ENCODE measurements at regions of chr14 and their contacts with region 1.

Region 1: DNA sequence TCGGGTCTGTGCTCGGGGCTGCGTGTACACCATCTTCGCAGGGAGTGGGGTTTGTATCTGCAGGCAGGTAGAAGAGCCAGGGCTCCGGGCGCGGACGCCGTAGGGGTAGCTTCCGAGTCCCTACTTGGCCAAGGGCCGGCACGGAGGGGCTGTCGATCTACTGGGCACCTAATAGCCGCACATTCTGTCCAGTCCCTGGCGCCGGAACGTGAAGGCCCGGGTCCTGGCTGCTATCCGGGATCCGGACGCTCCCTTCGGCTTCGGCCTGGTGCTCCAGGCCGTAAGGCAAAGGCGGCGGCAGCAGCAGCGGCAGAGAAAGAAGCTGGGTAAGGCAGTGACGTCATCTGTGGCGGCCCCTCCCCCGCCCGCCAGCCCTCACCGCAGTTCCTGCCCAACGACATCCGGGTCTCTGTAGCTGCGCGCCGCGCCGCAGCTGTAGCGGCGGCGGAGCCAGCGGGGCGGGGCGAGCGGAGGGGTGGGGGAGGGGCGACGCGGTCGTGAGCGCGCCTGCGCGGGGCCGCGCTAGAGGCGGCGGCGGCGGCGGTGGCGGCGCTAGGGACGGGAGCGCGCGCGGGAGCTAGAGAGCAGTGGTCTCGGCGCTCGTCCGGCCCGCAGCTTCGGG is at the start of gene PPM1A:
- DNase-seq: peak; percentile 94
- H3K4me3 Mint-ChIP-seq: peak within 1 kb of the TSS; percentile 94
- H3K27ac Mint-ChIP-seq: peak within 1 kb of the TSS; percentile 100
- H3K4me1 Mint-ChIP-seq: peaks cover 52% of the 10 kb centered on the region
- H3K27me3 Mint-ChIP-seq: no peaks in the 10 kb centered on the region
- total RNA-seq, gene PPM1A: 35.3 to 36.1 TPM

Region 2: GRCh38 chr14:59483900-59484638 is 764.7 kb before region 1 on chr14 and contains the starts of genes JKAMP and L3HYPDH:
- CTCF ChIA-PET with region 1: no interaction called
- intact Hi-C with region 1: loop called (anchors 2 kb)
- DNase-seq: peak; percentile 98
- H3K4me3 Mint-ChIP-seq: peak within 1 kb of the TSS; percentile 91
- H3K27ac Mint-ChIP-seq: peak within 1 kb of the TSS; percentile 83
- H3K4me1 Mint-ChIP-seq: peaks cover 49% of the 10 kb centered on the region
- H3K27me3 Mint-ChIP-seq: no peaks in the 10 kb centered on the region
- total RNA-seq, gene JKAMP: 15.2 to 15.6 TPM
- total RNA-seq, gene L3HYPDH: 7.0 to 7.6 TPM

Region 3: DNA sequence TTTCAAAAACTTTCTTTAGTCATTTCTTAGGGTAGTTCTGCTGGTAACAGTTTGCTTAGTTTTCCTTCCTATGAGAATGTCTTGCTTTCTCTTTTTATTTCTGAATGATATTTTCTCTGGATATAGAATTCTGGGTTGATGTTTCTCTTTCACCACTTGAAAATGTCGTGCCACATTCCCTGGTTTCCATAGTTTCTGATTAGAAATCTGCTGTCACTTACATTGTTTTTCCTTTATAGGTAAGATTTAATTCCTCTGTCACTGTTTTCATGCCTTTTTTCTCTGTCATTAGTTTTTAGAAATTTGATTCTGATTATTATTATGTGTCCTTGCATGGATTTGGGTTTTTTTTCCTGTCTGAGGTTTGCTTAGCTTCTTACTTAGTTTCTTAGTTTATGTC is 234.4 kb before region 1 on chr14:
- CTCF ChIA-PET with region 1: no interaction called
- intact Hi-C with region 1: no loop called
- DNase-seq: no peak
- H3K4me3 Mint-ChIP-seq: no peak overlapping the region
- H3K27ac Mint-ChIP-seq: no peak overlapping the region
- H3K4me1 Mint-ChIP-seq: no peaks in the 10 kb centered on the region
- H3K27me3 Mint-ChIP-seq: peaks cover 6% of the 10 kb centered on the region

Region 4: GRCh38 chr14:60091550-60092530 is 157.0 kb before region 1 on chr14 and contains the start of gene PCNX4:
- CTCF ChIA-PET with region 1: no interaction called
- intact Hi-C with region 1: loop called (anchors 1 kb)
- DNase-seq: peak; percentile 95
- H3K4me3 Mint-ChIP-seq: peak within 1 kb of the TSS; percentile 98
- H3K27ac Mint-ChIP-seq: peak within 1 kb of the TSS; percentile 95
- H3K4me1 Mint-ChIP-seq: peaks cover 34% of the 10 kb centered on the region
- H3K27me3 Mint-ChIP-seq: peaks cover 9% of the 10 kb centered on the region
- total RNA-seq, gene PCNX4: 24.9 to 27.5 TPM

Region 5: GRCh38 chr14:60184146-60184904 is 64.5 kb before region 1 on chr14:
- CTCF ChIA-PET with region 1: interaction called, 14 read pairs
- intact Hi-C with region 1: loop called (anchors 1 kb)
- DNase-seq: peak; percentile 22
- H3K4me3 Mint-ChIP-seq: peak overlapping the region; percentile 62
- H3K27ac Mint-ChIP-seq: peak overlapping the region; percentile 89
- H3K4me1 Mint-ChIP-seq: peaks cover 19% of the 10 kb centered on the region
- H3K27me3 Mint-ChIP-seq: no peaks in the 10 kb centered on the region

Region 6: DNA sequence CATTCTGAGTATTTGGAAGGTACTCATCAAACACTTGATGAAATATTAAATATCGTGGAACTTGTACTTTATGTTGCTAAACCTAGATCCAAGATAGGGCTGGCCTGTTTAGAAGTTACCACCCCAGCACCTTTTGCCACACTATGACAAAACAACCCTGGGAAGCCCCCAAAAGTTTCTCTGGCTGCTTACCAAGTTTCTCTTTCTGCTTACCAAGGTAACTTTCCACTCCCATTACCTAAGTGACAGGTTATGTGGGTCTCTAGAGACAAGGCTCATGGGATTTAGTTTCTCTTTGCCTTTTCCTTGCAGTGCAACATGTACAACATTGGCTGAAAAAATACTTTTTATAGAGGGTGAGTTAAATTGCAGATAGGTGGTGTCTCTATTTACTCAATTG is 28.7 kb before region 1 on chr14:
- CTCF ChIA-PET with region 1: no interaction called
- intact Hi-C with region 1: loop called (anchors 2 kb)
- DNase-seq: peak; percentile 27
- H3K4me3 Mint-ChIP-seq: no peak overlapping the region
- H3K27ac Mint-ChIP-seq: no peak overlapping the region
- H3K4me1 Mint-ChIP-seq: peaks cover 15% of the 10 kb centered on the region
- H3K27me3 Mint-ChIP-seq: no peaks in the 10 kb centered on the region

Region 7: GRCh38 chr14:60232185-60232584 is 16.6 kb before region 1 on chr14:
- CTCF ChIA-PET with region 1: no interaction called
- intact Hi-C with region 1: no loop called
- DNase-seq: no peak
- H3K4me3 Mint-ChIP-seq: no peak overlapping the region
- H3K27ac Mint-ChIP-seq: no peak overlapping the region
- H3K4me1 Mint-ChIP-seq: no peaks in the 10 kb centered on the region
- H3K27me3 Mint-ChIP-seq: no peaks in the 10 kb centered on the region

Region 8: GRCh38 chr14:60705100-60705499 is 456.3 kb after region 1 on chr14:
- CTCF ChIA-PET with region 1: no interaction called
- intact Hi-C with region 1: no loop called
- DNase-seq: no peak
- H3K4me3 Mint-ChIP-seq: no peak overlapping the region
- H3K27ac Mint-ChIP-seq: no peak overlapping the region
- H3K4me1 Mint-ChIP-seq: no peaks in the 10 kb centered on the region
- H3K27me3 Mint-ChIP-seq: peaks cover 17% of the 10 kb centered on the region

Region 9: DNA sequence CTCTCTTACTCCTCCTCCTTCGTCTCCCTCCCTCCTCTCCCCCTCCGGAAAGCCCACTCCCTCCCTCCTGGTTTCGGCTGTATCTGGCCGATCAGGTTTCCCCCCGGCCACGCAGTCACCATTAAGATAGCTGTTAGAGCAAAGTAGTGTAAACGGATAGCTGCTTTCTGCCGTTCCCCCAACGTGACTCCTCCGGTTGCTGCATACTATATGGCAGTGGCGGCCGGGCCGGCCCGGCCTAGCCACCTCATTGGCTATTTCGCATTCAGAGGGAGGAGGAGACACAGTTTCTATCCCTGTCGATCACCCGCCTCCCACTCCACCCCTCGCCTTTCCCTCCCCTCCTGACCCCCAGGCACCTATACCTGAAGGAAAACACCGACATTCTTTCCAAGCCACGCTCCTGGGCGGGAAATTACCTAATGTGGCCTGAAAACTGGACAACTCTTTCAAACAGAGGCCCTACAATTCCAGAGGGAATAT is 475.4 kb after region 1 on chr14 and contains the start of gene SIX4:
- CTCF ChIA-PET with region 1: no interaction called
- intact Hi-C with region 1: loop called (anchors 10 kb)
- DNase-seq: peak; percentile 15
- H3K4me3 Mint-ChIP-seq: peak within 1 kb of the TSS; percentile 78
- H3K27ac Mint-ChIP-seq: no peak within 1 kb of the TSS
- H3K4me1 Mint-ChIP-seq: peaks cover 19% of the 10 kb centered on the region
- H3K27me3 Mint-ChIP-seq: peaks cover 71% of the 10 kb centered on the region
- total RNA-seq, gene SIX4: not detected

Region 10: DNA sequence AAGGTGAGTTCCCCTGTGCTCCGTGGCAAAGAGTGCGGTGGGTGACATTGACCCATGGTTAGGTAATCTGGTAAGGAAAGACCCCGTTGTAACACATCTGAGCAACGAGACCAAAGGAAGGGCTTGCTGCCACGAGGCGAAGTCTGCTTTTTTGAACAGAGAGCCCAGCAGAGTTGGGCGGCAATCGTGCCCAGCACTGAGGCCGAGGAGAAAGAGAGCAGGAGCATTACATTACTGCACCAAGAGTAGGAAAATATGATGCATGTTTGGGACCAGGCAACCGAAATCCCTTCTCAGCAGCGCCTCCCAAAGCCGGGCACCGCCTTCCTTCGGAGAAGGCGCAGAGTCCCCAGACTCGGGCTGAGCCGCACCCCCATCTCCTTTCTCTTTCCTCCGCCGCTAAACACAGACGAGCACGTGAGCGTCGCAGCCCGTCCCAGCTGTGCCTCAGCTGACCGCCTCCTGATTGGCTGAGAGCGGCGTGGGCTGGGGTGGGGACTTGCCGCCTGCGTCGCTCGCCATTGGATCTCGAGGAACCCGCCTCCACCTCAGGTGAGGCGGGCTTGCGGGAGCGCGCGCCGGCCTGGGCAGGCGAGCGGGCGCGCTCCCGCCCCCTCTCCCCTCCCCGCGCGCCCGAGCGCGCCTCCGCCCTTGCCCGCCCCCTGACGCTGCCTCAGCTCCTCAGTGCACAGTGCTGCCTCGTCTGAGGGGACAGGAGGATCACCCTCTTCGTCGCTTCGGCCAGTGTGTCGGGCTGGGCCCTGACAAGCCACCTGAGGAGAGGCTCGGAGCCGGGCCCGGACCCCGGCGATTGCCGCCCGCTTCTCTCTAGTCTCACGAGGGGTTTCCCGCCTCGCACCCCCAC is 1446.3 kb after region 1 on chr14 and contains the start of gene HIF1A:
- CTCF ChIA-PET with region 1: no interaction called
- intact Hi-C with region 1: loop called (anchors 10 kb)
- DNase-seq: peak; percentile 98
- H3K4me3 Mint-ChIP-seq: peak within 1 kb of the TSS; percentile 94
- H3K27ac Mint-ChIP-seq: peak within 1 kb of the TSS; percentile 93
- H3K4me1 Mint-ChIP-seq: peaks cover 44% of the 10 kb centered on the region
- H3K27me3 Mint-ChIP-seq: no peaks in the 10 kb centered on the region
- total RNA-seq, gene HIF1A: 398 to 417 TPM

Measured in activated naive CD4-positive, alpha-beta T cell treated with anti-CD3 and anti-CD28 coated beads for 36 hours (primary cell).